Caco-2 (cell line): ENCODE measurements at regions of chr10 and their contacts with region 1.

Region 1: GRCh38 chr10:69408318-69409175 is 8.2 kb downstream of the TACR2 start:
- DNase-seq: peak; percentile 97 to 99
- H3K4me3 ChIP-seq: peak overlapping the region; percentile 52
- H3K4me3 Mint-ChIP-seq: peak overlapping the region; percentile 80
- H3K27ac Mint-ChIP-seq: peak overlapping the region; percentile 86
- H3K4me1 ChIP-seq: peaks cover 13% of the 10 kb centered on the region
- H3K4me1 Mint-ChIP-seq: peaks cover 15% of the 10 kb centered on the region
- H3K27me3 ChIP-seq: no peaks in the 10 kb centered on the region
- H3K27me3 Mint-ChIP-seq: no peaks in the 10 kb centered on the region
- CTCF ChIP-seq: peak; percentile 86 to 92

Region 2: GRCh38 chr10:69232252-69232651 is 176.3 kb before region 1 on chr10:
- CTCF ChIA-PET with region 1: interaction called, 15 read pairs
- POLR2A ChIA-PET with region 1: no interaction called
- intact Hi-C with region 1: loop called (anchors 1 kb)
- DNase-seq: peak; percentile 56 to 75
- H3K4me3 ChIP-seq: no peak overlapping the region
- H3K4me3 Mint-ChIP-seq: peak overlapping the region; percentile 1
- H3K27ac Mint-ChIP-seq: peak overlapping the region; percentile 28
- H3K4me1 ChIP-seq: peaks cover 40% of the 10 kb centered on the region
- H3K4me1 Mint-ChIP-seq: peaks cover 15% of the 10 kb centered on the region
- H3K27me3 ChIP-seq: no peaks in the 10 kb centered on the region
- H3K27me3 Mint-ChIP-seq: no peaks in the 10 kb centered on the region
- CTCF ChIP-seq: no peak

Region 3: DNA sequence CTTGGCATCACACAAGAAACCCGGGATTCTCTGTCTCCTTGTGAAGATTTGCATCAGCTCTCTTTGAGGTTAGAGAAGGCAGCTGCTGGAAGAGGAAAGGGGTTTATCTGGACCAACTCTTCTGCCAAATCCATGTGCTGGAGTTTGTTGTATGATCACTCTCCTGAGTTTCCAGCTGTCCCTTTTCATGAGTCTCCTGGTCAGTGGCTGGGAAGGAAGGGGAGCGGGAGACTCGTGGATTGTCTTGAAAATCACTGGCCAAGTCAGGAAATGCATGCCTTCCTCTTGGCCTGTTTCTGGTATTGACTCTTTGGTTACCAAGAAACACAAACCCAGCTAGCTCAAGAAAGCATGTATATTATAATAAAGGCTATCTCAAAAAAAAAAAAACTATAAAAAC is 30.6 kb before region 1 on chr10:
- CTCF ChIA-PET with region 1: interaction called, 3 read pairs
- POLR2A ChIA-PET with region 1: no interaction called
- intact Hi-C with region 1: loop called (anchors 1 kb)
- DNase-seq: no peak
- H3K4me3 ChIP-seq: no peak overlapping the region
- H3K4me3 Mint-ChIP-seq: no peak overlapping the region
- H3K27ac Mint-ChIP-seq: no peak overlapping the region
- H3K4me1 ChIP-seq: no peaks in the 10 kb centered on the region
- H3K4me1 Mint-ChIP-seq: no peaks in the 10 kb centered on the region
- H3K27me3 ChIP-seq: no peaks in the 10 kb centered on the region
- H3K27me3 Mint-ChIP-seq: no peaks in the 10 kb centered on the region
- CTCF ChIP-seq: no peak

Region 4: DNA sequence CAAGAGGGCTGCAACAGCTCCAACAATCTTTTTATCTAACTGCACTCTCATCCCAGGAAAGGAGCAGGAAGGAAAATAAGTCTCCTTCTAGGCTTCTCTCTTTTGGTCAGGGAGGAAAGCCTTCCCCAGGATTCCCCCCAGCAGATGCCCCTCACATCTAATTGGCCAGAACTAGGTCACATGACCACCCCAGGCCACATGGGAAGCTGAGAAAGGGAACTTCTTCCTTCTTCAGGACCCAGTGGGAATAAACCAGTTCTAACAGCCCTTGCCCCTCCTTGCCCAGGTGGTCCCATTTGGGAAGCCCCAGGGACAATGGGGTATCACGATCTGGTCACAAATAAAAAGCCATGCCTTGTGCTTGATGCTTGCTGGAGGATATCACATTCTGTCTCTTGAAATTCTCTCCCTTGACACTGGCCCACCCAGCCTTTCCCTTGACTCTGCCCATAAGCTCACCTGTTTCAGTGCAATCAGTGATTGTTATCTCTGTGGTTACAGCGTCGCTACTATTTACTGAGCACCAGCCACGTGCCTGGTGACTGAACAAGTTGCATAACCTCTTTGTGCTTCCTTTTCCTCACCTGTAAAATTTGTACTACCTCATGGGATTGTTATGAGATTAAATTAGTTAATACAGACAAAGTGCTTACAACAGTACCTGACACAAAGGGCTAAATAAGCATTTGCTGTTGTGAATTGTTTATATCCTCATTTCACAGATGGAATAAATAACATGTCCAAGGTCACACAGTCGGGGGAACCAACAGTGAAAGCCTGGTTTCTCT is 17.2 kb after region 1 on chr10:
- CTCF ChIA-PET with region 1: interaction called, 25 read pairs
- POLR2A ChIA-PET with region 1: interaction called, 4 read pairs
- intact Hi-C with region 1: loop called (anchors 1 kb)
- DNase-seq: peak; percentile 88 to 89
- H3K4me3 ChIP-seq: no peak overlapping the region
- H3K4me3 Mint-ChIP-seq: peak overlapping the region; percentile 47
- H3K27ac Mint-ChIP-seq: peak overlapping the region; percentile 84
- H3K4me1 ChIP-seq: peaks cover 24% of the 10 kb centered on the region
- H3K4me1 Mint-ChIP-seq: peaks cover 26% of the 10 kb centered on the region
- H3K27me3 ChIP-seq: no peaks in the 10 kb centered on the region
- H3K27me3 Mint-ChIP-seq: no peaks in the 10 kb centered on the region
- CTCF ChIP-seq: no peak

Region 5: GRCh38 chr10:69481305-69481704 is 72.8 kb after region 1 on chr10:
- CTCF ChIA-PET with region 1: no interaction called
- POLR2A ChIA-PET with region 1: no interaction called
- intact Hi-C with region 1: no loop called
- DNase-seq: no peak
- H3K4me3 ChIP-seq: no peak overlapping the region
- H3K4me3 Mint-ChIP-seq: no peak overlapping the region
- H3K27ac Mint-ChIP-seq: no peak overlapping the region
- H3K4me1 ChIP-seq: no peaks in the 10 kb centered on the region
- H3K4me1 Mint-ChIP-seq: no peaks in the 10 kb centered on the region
- H3K27me3 ChIP-seq: no peaks in the 10 kb centered on the region
- H3K27me3 Mint-ChIP-seq: no peaks in the 10 kb centered on the region
- CTCF ChIP-seq: no peak

Region 6: GRCh38 chr10:69506834-69507721 is 98.5 kb after region 1 on chr10:
- CTCF ChIA-PET with region 1: interaction called, 10 read pairs
- POLR2A ChIA-PET with region 1: no interaction called
- intact Hi-C with region 1: loop called (anchors 1 kb)
- DNase-seq: peak in 1 of 2 experiments; percentile 44
- H3K4me3 ChIP-seq: no peak overlapping the region
- H3K4me3 Mint-ChIP-seq: no peak overlapping the region
- H3K27ac Mint-ChIP-seq: no peak overlapping the region
- H3K4me1 ChIP-seq: peaks cover 5% of the 10 kb centered on the region
- H3K4me1 Mint-ChIP-seq: no peaks in the 10 kb centered on the region
- H3K27me3 ChIP-seq: no peaks in the 10 kb centered on the region
- H3K27me3 Mint-ChIP-seq: no peaks in the 10 kb centered on the region
- CTCF ChIP-seq: no peak

Region 7: GRCh38 chr10:69639291-69640195 is 231.0 kb after region 1 on chr10:
- CTCF ChIA-PET with region 1: interaction called, 39 read pairs
- POLR2A ChIA-PET with region 1: no interaction called
- intact Hi-C with region 1: loop called (anchors 1 kb)
- DNase-seq: peak; percentile 83 to 85
- H3K4me3 ChIP-seq: no peak overlapping the region
- H3K4me3 Mint-ChIP-seq: no peak overlapping the region
- H3K27ac Mint-ChIP-seq: no peak overlapping the region
- H3K4me1 ChIP-seq: no peaks in the 10 kb centered on the region
- H3K4me1 Mint-ChIP-seq: no peaks in the 10 kb centered on the region
- H3K27me3 ChIP-seq: 0 out of 2 replicates have a peak, but pooled peaks cover 1% of the 10 kb centered on the region
- H3K27me3 Mint-ChIP-seq: peaks cover 7% of the 10 kb centered on the region
- CTCF ChIP-seq: peak; percentile 97 to 99

Region 8: DNA sequence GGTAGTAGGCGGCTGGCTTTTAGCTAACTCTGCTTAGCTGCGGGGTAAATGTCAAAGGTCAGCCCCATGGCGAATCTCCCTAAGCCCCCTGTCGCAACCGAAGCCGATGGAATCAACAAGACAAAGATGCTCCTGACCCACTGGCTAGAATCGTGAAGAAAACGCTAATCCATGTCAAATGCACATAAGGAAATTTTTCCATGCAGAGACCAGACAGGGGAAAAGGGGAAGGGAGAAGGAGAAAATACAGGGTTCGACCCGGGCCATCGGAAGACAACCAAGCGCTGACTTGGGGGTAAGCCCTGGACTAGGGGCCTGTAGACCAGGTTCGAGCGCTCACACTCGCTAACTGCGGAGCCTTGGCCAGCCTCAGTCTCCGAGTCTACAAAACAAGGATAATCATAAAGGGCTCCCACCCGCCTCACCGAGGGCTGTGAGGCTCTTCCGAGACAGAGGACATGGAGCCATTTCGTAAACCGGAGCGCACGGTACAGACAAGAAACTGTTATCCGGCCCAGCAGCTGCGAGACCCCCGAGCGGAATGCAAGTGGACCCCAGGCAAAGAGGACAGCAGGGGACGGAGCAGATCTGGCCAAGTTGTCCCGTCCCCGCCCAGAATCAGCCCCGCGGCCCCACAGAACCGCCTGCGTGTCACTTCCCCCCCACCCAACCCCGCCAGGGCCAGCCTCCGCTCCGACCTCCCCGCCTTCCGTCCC is 761.3 kb after region 1 on chr10:
- CTCF ChIA-PET with region 1: no interaction called
- POLR2A ChIA-PET with region 1: no interaction called
- intact Hi-C with region 1: no loop called
- DNase-seq: peak in 1 of 2 experiments; percentile 33
- H3K4me3 ChIP-seq: peak overlapping the region; percentile 66
- H3K4me3 Mint-ChIP-seq: peak overlapping the region; percentile 96
- H3K27ac Mint-ChIP-seq: peak overlapping the region; percentile 98
- H3K4me1 ChIP-seq: peaks cover 5% of the 10 kb centered on the region
- H3K4me1 Mint-ChIP-seq: peaks cover 24% of the 10 kb centered on the region
- H3K27me3 ChIP-seq: no peaks in the 10 kb centered on the region
- H3K27me3 Mint-ChIP-seq: no peaks in the 10 kb centered on the region
- CTCF ChIP-seq: no peak